ENCODE measurements at regions of chr20 and their contacts with region 1.

Region 1: GRCh38 chr20:12012241-12013222 is 94.8 kb downstream of the BTBD3 start:
- DNase-seq: peak; percentile 75
- H3K4me3 Mint-ChIP-seq: no peak overlapping the region
- H3K27ac Mint-ChIP-seq: no peak overlapping the region
- H3K4me1 Mint-ChIP-seq: no peaks in the 10 kb centered on the region
- H3K27me3 Mint-ChIP-seq: no peaks in the 10 kb centered on the region
- CTCF ChIP-seq: peak; percentile 77

Region 2: DNA sequence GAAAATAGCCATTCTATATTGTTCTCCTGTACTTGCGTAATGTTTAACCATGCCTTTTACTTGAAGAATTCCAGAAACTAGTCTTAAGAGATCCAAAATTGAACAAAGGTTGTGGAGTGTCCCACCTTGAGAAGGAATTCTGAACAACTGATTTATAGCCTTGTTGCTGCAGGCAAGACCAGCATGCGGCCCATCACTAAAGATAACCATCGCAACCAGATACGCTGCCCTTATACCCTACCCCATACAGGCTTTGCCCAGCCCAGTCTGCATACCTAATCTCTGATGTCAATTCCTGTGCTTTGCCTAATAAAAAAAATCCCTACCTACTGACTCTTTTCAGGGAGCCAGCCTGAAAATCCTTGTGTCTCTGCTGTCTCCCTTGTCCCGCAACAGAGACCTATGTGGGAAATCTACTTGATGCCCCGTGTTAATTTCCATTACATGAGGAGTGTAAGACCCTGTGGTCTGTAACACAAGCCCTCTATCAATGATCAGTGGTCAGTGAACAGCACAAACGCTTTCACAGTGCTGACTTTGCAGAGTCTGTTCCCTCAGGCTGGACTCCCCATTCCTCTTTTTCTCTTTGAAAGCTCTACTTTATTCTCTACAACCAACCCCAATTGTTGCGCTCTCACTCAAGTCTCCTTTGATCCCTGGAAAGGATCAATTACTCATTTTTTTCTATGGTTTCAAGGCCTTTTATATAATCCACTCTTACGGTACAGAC is 220.5 kb before region 1 on chr20:
- CTCF ChIA-PET with region 1: no interaction called
- POLR2A ChIA-PET with region 1: no interaction called
- intact Hi-C with region 1: no loop called
- DNase-seq: peak; percentile 44
- H3K4me3 Mint-ChIP-seq: no peak overlapping the region
- H3K27ac Mint-ChIP-seq: peak overlapping the region; percentile 12
- H3K4me1 Mint-ChIP-seq: peaks cover 22% of the 10 kb centered on the region
- H3K27me3 Mint-ChIP-seq: no peaks in the 10 kb centered on the region
- CTCF ChIP-seq: no peak

Region 3: GRCh38 chr20:12965212-12965869 is 952.8 kb after region 1 on chr20:
- CTCF ChIA-PET with region 1: interaction called, 10 read pairs
- POLR2A ChIA-PET with region 1: no interaction called
- intact Hi-C with region 1: no loop called
- DNase-seq: no peak
- H3K4me3 Mint-ChIP-seq: no peak overlapping the region
- H3K27ac Mint-ChIP-seq: no peak overlapping the region
- H3K4me1 Mint-ChIP-seq: no peaks in the 10 kb centered on the region
- H3K27me3 Mint-ChIP-seq: no peaks in the 10 kb centered on the region
- CTCF ChIP-seq: no peak

Region 4: GRCh38 chr20:13312300-13312699 is 1299.8 kb after region 1 on chr20:
- CTCF ChIA-PET with region 1: no interaction called
- POLR2A ChIA-PET with region 1: no interaction called
- intact Hi-C with region 1: no loop called
- DNase-seq: no peak
- H3K4me3 Mint-ChIP-seq: no peak overlapping the region
- H3K27ac Mint-ChIP-seq: no peak overlapping the region
- H3K4me1 Mint-ChIP-seq: no peaks in the 10 kb centered on the region
- H3K27me3 Mint-ChIP-seq: no peaks in the 10 kb centered on the region
- CTCF ChIP-seq: no peak